ENCODE measurements at regions of chr12 and their contacts with region 1.

Region 1: DNA sequence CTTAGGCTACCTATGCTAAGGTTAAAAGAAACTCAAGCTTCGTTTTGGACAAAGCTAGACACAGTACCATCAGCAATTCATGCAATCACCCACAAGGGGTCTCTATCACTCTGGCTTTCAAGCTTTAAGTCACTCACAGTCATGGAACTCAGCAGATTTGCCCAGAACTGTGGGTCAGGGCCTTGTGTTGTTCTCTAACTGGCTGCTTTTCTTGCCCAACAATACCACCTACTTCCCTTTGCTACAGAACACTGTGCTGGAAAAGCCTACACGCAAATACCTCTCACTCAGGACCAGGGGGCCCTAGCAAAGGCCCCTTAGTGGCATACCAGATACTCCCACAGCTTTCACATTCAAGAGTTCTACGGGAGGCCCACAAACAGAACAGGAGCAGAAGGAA is 9.1 kb downstream of the NEMP1 start:
- DNase-seq: peak; percentile 56

Region 2: GRCh38 chr12:57058454-57058853 is 11.1 kb before region 1 on chr12:
- CTCF ChIA-PET with region 1: no interaction called
- POLR2A ChIA-PET with region 1: no interaction called
- DNase-seq: no peak

Region 3: GRCh38 chr12:57088459-57089248 is 19.1 kb after region 1 on chr12 and contains the start of gene NAB2:
- CTCF ChIA-PET with region 1: interaction called, 23 read pairs
- POLR2A ChIA-PET with region 1: interaction called, 6 read pairs
- DNase-seq: peak; percentile 85

Region 4: GRCh38 chr12:57166971-57167371 is 97.4 kb after region 1 on chr12:
- CTCF ChIA-PET with region 1: no interaction called
- POLR2A ChIA-PET with region 1: no interaction called
- DNase-seq: no peak